H1 (cell line): ENCODE measurements at regions of chr20 and their contacts with region 1.

Region 1: DNA sequence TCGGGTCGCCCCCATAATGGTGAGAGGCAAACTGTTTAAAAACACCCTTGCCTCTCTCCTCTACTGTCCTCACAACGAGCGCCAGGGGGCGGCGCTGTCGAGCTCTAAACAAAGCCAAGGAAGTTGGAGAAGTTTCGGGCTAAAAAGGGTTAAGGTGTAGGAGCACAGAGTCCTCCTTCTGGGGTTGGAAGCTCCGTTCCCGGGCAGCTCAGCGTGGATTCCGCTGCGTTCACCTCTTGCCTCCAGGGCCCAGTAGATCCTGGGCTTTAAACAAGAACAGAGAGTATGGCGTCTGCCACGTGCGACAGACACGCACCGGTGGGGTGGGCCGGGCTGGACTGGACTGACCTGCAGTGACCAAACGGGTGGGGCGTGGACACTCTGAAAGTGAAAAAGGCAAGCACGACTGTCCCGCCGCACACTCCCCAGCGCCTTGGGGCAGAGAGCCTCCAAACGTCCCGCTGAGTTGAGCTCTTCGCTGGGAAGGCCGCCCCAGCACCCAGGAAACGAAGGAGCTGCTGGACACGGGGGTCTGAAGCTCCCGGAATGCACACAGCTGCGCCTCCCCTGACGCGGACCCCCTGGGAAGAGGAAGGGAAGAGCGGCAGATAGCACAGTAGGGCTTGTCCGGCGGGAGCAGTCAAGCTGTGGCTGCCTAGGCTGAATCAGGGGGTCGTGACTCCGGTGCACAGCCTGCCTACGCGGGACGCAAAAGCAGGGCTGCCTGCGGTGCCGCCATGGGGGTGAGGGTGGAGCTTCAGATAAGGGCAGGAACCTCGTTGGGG is 1.6 kb upstream of the THBD start:
- DNase-seq: peak; percentile 78 to 98
- H3K4me3 ChIP-seq: peak overlapping the region; percentile 47 to 71 (median 61)
- H3K27ac ChIP-seq: no peak overlapping the region
- H3K4me1 ChIP-seq: peaks cover 4 to 12% (median 6%) of the 10 kb centered on the region in 4 experiments; a peak in 6 of 7 replicates
- H3K27me3 ChIP-seq: peaks cover 31 to 61% (median 50%) of the 10 kb centered on the region in 4 experiments
- CTCF ChIP-seq: peak; percentile 68 to 90 (median 85)
- EP300 ChIP-seq: no peak
- POLR2A ChIP-seq: no peak
- RAD21 ChIP-seq: peak; percentile 81 to 86

Region 2: DNA sequence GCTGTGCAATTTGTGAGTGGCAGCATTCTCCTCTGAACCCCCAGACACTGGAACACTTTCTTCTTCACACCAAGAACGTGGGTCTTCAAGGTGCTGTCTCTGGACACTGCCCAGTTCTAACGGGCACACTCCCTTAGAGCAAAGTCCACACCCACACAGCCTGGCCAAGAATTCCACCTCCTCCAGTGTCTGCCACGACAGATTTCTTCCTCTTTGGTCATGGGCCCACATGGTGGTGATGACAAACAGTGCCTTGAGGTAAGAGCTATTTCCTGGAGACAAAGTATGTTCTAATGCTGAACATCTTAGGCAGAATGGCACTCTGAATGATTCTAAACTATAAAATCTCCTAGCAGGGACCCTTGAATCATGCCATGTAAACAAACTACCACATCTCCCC is 41.4 kb before region 1 on chr20:
- CTCF ChIA-PET with region 1: no interaction called
- POLR2A ChIA-PET with region 1: no interaction called
- DNase-seq: no peak
- H3K4me3 ChIP-seq: no peak overlapping the region
- H3K27ac ChIP-seq: no peak overlapping the region
- H3K4me1 ChIP-seq: peaks cover 0 to 4% (median 3%) of the 10 kb centered on the region in 4 experiments; a peak in 3 of 7 replicates
- H3K27me3 ChIP-seq: no peaks in the 10 kb centered on the region
- CTCF ChIP-seq: no peak
- EP300 ChIP-seq: no peak
- POLR2A ChIP-seq: no peak
- RAD21 ChIP-seq: no peak

Region 3: GRCh38 chr20:23061734-23062561 is 10.9 kb after region 1 on chr20:
- CTCF ChIA-PET with region 1: interaction called, 90 read pairs
- POLR2A ChIA-PET with region 1: interaction called, 13 read pairs
- DNase-seq: peak in 1 of 2 experiments; percentile 57
- H3K4me3 ChIP-seq: no peak overlapping the region
- H3K27ac ChIP-seq: 0 out of 2 replicates have a peak overlapping the region, but pooled peaks have one; percentile 4
- H3K4me1 ChIP-seq: peaks cover 0 to 9% (median 4%) of the 10 kb centered on the region in 4 experiments; a peak in 5 of 7 replicates
- H3K27me3 ChIP-seq: no peaks in the 10 kb centered on the region
- CTCF ChIP-seq: peak; percentile 45 to 81 (median 63)
- EP300 ChIP-seq: peak in 1 of 2 experiments; percentile 70; a peak in 1 of 3 replicates
- POLR2A ChIP-seq: no peak
- RAD21 ChIP-seq: peak; percentile 59 to 64

Region 4: DNA sequence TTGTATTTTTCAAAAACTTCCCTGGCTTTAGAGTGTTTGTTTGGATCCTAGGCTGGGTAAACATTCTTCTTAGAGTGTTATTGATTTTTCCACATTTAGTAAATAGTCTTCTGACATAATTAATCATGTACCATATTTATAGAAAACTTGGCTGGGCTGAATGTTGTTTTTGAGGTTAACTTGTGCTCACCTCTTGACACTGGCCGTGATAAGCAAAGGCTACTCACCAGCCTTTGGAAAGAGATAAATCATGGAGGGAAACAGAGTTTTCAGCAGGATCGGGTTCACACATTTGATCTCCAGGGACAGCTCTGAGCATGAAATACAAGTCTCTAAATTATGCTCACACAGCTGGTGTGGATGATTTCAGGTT is 41.3 kb after region 1 on chr20:
- CTCF ChIA-PET with region 1: interaction called, 14 read pairs
- POLR2A ChIA-PET with region 1: no interaction called
- DNase-seq: no peak
- H3K4me3 ChIP-seq: no peak overlapping the region
- H3K27ac ChIP-seq: no peak overlapping the region
- H3K4me1 ChIP-seq: peaks cover 0 to 4% (median 2%) of the 10 kb centered on the region in 4 experiments; a peak in 3 of 7 replicates
- H3K27me3 ChIP-seq: no peaks in the 10 kb centered on the region
- CTCF ChIP-seq: no peak
- EP300 ChIP-seq: no peak
- POLR2A ChIP-seq: no peak
- RAD21 ChIP-seq: no peak

Region 5: DNA sequence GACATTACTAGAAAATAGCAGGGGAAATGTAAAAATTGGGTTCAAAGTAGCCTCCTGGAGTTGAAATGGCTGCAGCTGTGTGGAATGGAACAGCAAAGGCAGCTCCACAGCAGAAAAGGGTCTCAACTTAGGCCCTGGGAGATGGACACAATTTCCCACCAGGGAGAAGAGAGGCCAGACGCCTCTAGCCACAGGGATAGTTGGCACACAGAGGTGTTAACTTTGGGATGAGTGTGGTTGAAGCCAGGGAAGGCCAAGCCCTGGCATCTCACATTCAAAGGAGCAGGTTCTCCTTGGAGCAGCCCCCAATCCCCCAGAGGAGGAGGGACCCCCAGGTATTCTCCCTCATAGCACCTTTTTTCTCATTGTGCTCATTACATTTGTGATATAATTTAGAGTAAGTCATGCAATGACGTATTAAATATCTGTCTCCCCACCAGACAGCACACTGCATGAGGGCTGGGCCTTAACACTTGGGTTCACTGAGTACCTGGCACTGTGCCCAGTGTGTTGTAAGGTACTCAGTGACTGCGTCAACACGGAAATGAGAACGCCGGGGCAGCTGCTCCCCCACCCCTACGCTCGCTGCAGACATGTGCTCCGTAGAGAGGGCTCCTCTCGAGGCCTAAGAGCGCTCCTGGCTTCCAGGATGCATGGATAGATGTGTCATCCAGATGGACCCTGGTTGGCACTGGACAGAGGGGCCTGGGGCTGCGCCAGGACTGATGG is 111.1 kb after region 1 on chr20:
- CTCF ChIA-PET with region 1: interaction called, 11 read pairs
- POLR2A ChIA-PET with region 1: no interaction called
- DNase-seq: peak in 1 of 2 experiments; percentile 16
- H3K4me3 ChIP-seq: no peak overlapping the region
- H3K27ac ChIP-seq: no peak overlapping the region
- H3K4me1 ChIP-seq: peaks cover 2 to 7% (median 3%) of the 10 kb centered on the region in 4 experiments; a peak in 4 of 7 replicates
- H3K27me3 ChIP-seq: no peaks in the 10 kb centered on the region
- CTCF ChIP-seq: no peak
- EP300 ChIP-seq: no peak
- POLR2A ChIP-seq: no peak
- RAD21 ChIP-seq: no peak

Region 6: GRCh38 chr20:23235173-23236027 is 184.4 kb after region 1 on chr20:
- CTCF ChIA-PET with region 1: interaction called, 14 read pairs
- POLR2A ChIA-PET with region 1: no interaction called
- DNase-seq: peak; percentile 39 to 71
- H3K4me3 ChIP-seq: no peak overlapping the region
- H3K27ac ChIP-seq: no peak overlapping the region
- H3K4me1 ChIP-seq: no peaks in the 10 kb centered on the region; a peak in 1 of 7 replicates
- H3K27me3 ChIP-seq: no peaks in the 10 kb centered on the region
- CTCF ChIP-seq: peak; percentile 88 to 94 (median 91)
- EP300 ChIP-seq: no peak
- POLR2A ChIP-seq: no peak
- RAD21 ChIP-seq: peak; percentile 90 to 91